Activated CD4-positive, alpha-beta memory T cell treated with anti-CD3 and anti-CD28 coated beads for 36 hours (primary cell): ENCODE measurements at regions of chr1 and their contacts with region 1.

Region 1: DNA sequence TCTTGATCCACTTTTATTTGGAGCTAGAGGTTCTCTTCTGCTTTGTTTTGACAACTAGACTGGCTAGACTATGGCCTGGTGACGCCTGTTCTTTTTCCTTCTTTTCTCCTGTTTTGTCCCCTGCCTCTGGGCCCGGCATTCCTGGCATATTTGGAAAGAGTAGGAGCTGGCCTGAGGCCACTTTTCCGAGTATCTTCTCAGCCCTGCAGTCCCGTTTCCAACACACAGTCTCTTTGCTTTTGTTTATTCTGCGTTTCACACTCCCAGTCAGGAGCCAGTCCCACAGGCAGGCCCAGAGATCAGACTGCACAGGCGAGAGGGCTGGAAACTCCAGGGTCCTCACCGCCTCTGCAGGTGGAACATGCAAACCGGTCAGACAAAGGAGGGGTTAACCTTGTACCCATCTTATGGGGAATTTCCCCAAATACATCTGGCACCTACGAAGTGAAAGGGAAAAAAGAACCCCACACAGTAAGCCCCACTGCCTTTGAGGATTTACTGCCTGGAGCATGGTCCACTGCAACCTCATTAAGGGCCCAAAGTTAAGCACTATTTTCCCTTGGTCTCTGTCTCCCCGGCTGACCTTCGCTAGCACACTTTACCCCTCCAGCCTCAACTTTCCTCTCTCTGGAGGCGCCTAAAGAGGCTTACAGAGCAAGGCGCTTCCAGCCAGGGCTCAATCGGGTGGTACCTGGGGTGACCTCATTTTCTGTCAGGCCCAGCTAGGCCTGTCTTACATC is 141.1 kb downstream of the TOMM20 start:
- DNase-seq: peak; percentile 56
- H3K4me3 Mint-ChIP-seq: peak overlapping the region; percentile 4
- H3K27ac Mint-ChIP-seq: peak overlapping the region; percentile 85
- H3K4me1 Mint-ChIP-seq: peaks cover 76% of the 10 kb centered on the region
- H3K27me3 Mint-ChIP-seq: no peaks in the 10 kb centered on the region

Region 2: GRCh38 chr1:234970731-234971476 is 16.7 kb before region 1 on chr1:
- CTCF ChIA-PET with region 1: no interaction called
- POLR2A ChIA-PET with region 1: interaction called, 6 read pairs
- intact Hi-C with region 1: loop called (anchors 2 kb)
- DNase-seq: peak; percentile 70
- H3K4me3 Mint-ChIP-seq: peak overlapping the region; percentile 30
- H3K27ac Mint-ChIP-seq: peak overlapping the region; percentile 83
- H3K4me1 Mint-ChIP-seq: peaks cover 67% of the 10 kb centered on the region
- H3K27me3 Mint-ChIP-seq: no peaks in the 10 kb centered on the region

Region 3: DNA sequence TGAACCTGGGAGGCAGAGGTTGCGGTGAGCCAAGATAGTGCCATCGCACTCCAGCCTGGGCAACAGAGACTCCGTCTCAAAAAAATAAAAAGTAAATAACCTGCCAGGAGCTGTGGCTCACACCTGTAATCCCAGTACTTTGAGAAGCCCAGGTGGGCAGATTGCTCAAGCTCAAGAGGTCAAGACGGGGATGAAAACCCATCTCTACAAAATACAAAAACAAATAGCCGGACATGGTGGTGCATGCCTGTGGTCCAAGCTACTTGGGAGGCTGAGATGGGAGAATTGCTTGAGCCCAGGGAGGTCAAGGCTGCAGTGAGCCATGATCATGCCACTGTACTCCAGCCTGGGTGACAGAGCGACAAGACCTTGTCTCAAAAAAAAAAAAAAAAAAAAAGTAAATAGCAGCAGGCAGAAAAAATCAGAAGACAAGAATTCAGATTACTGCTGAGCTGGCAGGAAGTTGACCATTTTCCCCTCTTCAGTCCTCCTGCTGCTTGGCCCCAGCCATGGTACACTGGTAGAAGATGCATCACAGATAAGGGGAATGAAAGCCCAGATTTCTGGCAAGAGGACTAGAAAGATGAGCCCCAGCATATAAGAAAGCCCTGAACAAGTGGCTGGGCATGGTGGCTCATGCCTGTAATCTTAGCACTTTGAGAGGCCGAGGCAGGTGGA is 43.5 kb after region 1 on chr1:
- CTCF ChIA-PET with region 1: no interaction called
- POLR2A ChIA-PET with region 1: no interaction called
- intact Hi-C with region 1: no loop called
- DNase-seq: peak; percentile 5
- H3K4me3 Mint-ChIP-seq: no peak overlapping the region
- H3K27ac Mint-ChIP-seq: no peak overlapping the region
- H3K4me1 Mint-ChIP-seq: peaks cover 21% of the 10 kb centered on the region
- H3K27me3 Mint-ChIP-seq: no peaks in the 10 kb centered on the region